ENCODE measurements at regions of chr4 and their contacts with region 1.

Region 1: GRCh38 chr4:25180524-25181131 is 20.4 kb upstream of the SEPSECS start:
- DNase-seq: no peak
- ATAC-seq: no peak

Region 2: GRCh38 chr4:24519649-24520048 is 661.0 kb before region 1 on chr4:
- intact Hi-C with region 1: no loop called
- DNase-seq: no peak
- ATAC-seq: no peak

Region 3: GRCh38 chr4:25367004-25367621 is 186.5 kb after region 1 on chr4:
- intact Hi-C with region 1: loop called (anchors 5 kb)
- DNase-seq: no peak
- ATAC-seq: no peak